ENCODE measurements at regions of chr12 and their contacts with region 1.

Region 1: GRCh38 chr12:100142851-100143559 is at the start of gene BLTP3B:
- DNase-seq: peak; percentile 93
- H3K4me3 Mint-ChIP-seq: peak within 1 kb of the TSS; percentile 91
- H3K27ac Mint-ChIP-seq: peak within 1 kb of the TSS; percentile 97
- H3K4me1 Mint-ChIP-seq: peaks cover 36% of the 10 kb centered on the region
- H3K27me3 Mint-ChIP-seq: no peaks in the 10 kb centered on the region
- total RNA-seq, gene BLTP3B: 27.0 to 27.2 TPM

Region 2: DNA sequence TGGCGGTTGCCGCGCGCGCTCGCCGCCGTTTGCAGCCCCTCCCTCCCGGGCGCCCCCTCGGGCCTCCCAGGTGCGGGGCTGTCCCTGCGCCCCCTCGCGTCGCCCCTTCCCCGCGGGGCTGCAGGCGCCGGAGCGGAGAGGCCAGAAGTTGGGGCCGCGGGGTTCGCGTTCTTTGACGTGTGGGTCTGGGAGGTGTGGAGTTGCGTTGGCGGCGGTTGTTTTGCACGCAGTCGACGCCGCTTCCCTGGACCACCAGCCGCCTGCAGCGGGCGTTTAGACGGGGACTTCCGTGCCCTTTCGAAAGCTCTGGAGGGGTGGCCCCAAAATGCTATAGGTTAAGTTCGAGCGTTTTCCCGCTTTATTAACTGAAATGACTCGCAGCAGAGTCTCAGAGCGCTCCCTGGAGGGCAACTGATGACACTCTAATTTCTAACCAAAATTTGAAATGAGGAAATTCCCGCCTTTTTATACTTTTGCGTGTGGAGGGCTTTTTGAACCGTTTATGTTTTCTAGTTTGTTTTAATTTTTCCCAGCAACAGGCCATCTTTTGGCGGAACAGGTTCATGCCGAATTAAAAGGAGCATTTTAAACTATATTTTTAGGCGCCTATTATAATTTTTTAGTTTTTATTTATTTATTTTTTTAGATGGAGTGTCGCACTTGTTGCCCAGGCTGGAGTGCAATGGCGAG is 1626.7 kb before region 1 on chr12:
- CTCF ChIA-PET with region 1: no interaction called
- intact Hi-C with region 1: loop called (anchors 5 kb)
- DNase-seq: peak; percentile 96
- H3K4me3 Mint-ChIP-seq: peak overlapping the region; percentile 92
- H3K27ac Mint-ChIP-seq: peak overlapping the region; percentile 99
- H3K4me1 Mint-ChIP-seq: peaks cover 37% of the 10 kb centered on the region
- H3K27me3 Mint-ChIP-seq: no peaks in the 10 kb centered on the region

Region 3: DNA sequence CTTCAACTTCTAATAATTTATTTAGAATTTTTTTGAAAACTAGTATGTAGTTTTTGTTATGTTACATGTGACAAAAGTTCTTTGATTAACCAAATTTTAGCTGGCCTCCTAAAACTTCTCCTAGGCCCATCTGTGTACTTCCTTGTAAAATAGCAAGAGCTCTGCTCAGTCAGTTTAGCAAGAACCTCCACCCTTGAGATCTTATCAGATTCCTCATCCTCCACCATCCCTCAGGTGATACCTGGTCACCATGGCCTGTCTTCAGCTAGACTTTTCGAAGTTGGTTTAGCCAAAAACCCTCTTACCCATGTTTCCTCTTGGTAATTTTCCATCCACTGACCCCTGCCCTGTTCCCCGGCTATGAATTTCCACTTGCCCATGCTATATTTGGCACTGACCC is 300.7 kb before region 1 on chr12:
- CTCF ChIA-PET with region 1: no interaction called
- intact Hi-C with region 1: no loop called
- DNase-seq: no peak
- H3K4me3 Mint-ChIP-seq: no peak overlapping the region
- H3K27ac Mint-ChIP-seq: no peak overlapping the region
- H3K4me1 Mint-ChIP-seq: no peaks in the 10 kb centered on the region
- H3K27me3 Mint-ChIP-seq: no peaks in the 10 kb centered on the region

Region 4: GRCh38 chr12:100154474-100155247 is 11.7 kb after region 1 on chr12:
- CTCF ChIA-PET with region 1: interaction called, 27 read pairs
- intact Hi-C with region 1: no loop called
- DNase-seq: peak; percentile 79
- H3K4me3 Mint-ChIP-seq: no peak overlapping the region
- H3K27ac Mint-ChIP-seq: no peak overlapping the region
- H3K4me1 Mint-ChIP-seq: peaks cover 6% of the 10 kb centered on the region
- H3K27me3 Mint-ChIP-seq: no peaks in the 10 kb centered on the region

Region 5: GRCh38 chr12:100200463-100201181 is 57.6 kb after region 1 on chr12 and contains the start of gene ACTR6:
- CTCF ChIA-PET with region 1: interaction called, 6 read pairs
- intact Hi-C with region 1: loop called (anchors 1 kb)
- DNase-seq: peak; percentile 98
- H3K4me3 Mint-ChIP-seq: peak within 1 kb of the TSS; percentile 99
- H3K27ac Mint-ChIP-seq: peak within 1 kb of the TSS; percentile 99
- H3K4me1 Mint-ChIP-seq: peaks cover 27% of the 10 kb centered on the region
- H3K27me3 Mint-ChIP-seq: no peaks in the 10 kb centered on the region
- total RNA-seq, gene ACTR6: 38.0 to 41.8 TPM